A549 (cell line): ENCODE measurements at regions of chr17 and their contacts with region 1.

Region 1: GRCh38 chr17:34171245-34171818 is 83.8 kb upstream of the CCL2 start:
- DNase-seq: peak; percentile 60 to 68
- ATAC-seq: peak; percentile 68 to 97; a peak in 4 of 6 replicates
- H3K4me3 ChIP-seq: no peak overlapping the region
- H3K27ac ChIP-seq: no peak overlapping the region
- H3K4me1 ChIP-seq: no peaks in the 10 kb centered on the region
- CTCF ChIP-seq: peak; percentile 63
- EP300 ChIP-seq: no peak
- POLR2A ChIP-seq: no peak
- RAD21 ChIP-seq: peak; percentile 32 to 60; a peak in 4 of 5 replicates

Region 2: DNA sequence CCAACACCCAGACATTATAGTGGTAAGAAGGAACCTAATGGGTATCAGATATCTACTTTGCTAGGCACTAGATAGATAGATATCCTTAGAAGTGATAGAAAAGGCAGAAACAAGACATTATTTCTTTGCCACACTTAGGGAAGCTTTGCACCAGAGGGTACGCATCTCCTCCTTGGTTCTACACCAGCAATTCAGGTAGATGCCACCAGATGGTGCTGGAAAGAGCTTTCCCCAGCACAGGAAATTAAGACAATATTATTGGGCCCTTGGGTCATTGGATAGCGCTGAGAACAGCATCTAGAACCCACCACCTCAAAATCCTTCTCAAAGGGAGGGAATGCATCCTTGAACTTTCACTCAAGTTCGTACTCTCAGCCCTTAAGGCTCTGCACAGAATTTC is 90.1 kb before region 1 on chr17:
- CTCF ChIA-PET with region 1: no interaction called
- POLR2A ChIA-PET with region 1: no interaction called
- DNase-seq: peak; percentile 20 to 27
- ATAC-seq: peak; percentile 70 to 80; a peak in 5 of 6 replicates
- H3K4me3 ChIP-seq: no peak overlapping the region
- H3K27ac ChIP-seq: no peak overlapping the region
- H3K4me1 ChIP-seq: no peaks in the 10 kb centered on the region
- CTCF ChIP-seq: peak; percentile 36; the same call in 2 of the 3 replicates
- EP300 ChIP-seq: no peak
- POLR2A ChIP-seq: no peak
- RAD21 ChIP-seq: peak in 1 of 2 experiments; percentile 12; a peak in 1 of 5 replicates

Region 3: GRCh38 chr17:34098699-34099098 is 72.6 kb before region 1 on chr17:
- CTCF ChIA-PET with region 1: no interaction called
- POLR2A ChIA-PET with region 1: no interaction called
- DNase-seq: peak in 1 of 2 experiments; percentile 14
- ATAC-seq: peak in 1 of 2 experiments; percentile 72; a peak in 2 of 6 replicates
- H3K4me3 ChIP-seq: no peak overlapping the region
- H3K27ac ChIP-seq: no peak overlapping the region
- H3K4me1 ChIP-seq: no peaks in the 10 kb centered on the region
- CTCF ChIP-seq: no peak
- EP300 ChIP-seq: no peak
- POLR2A ChIP-seq: no peak
- RAD21 ChIP-seq: no peak

Region 4: GRCh38 chr17:34110315-34110714 is 61.0 kb before region 1 on chr17:
- CTCF ChIA-PET with region 1: no interaction called
- POLR2A ChIA-PET with region 1: no interaction called
- DNase-seq: no peak
- ATAC-seq: no peak
- H3K4me3 ChIP-seq: no peak overlapping the region
- H3K27ac ChIP-seq: no peak overlapping the region
- H3K4me1 ChIP-seq: no peaks in the 10 kb centered on the region
- CTCF ChIP-seq: no peak
- EP300 ChIP-seq: no peak
- POLR2A ChIP-seq: no peak
- RAD21 ChIP-seq: no peak

Region 5: GRCh38 chr17:34126965-34127364 is 44.4 kb before region 1 on chr17:
- CTCF ChIA-PET with region 1: no interaction called
- POLR2A ChIA-PET with region 1: no interaction called
- DNase-seq: no peak
- ATAC-seq: no peak
- H3K4me3 ChIP-seq: no peak overlapping the region
- H3K27ac ChIP-seq: no peak overlapping the region
- H3K4me1 ChIP-seq: no peaks in the 10 kb centered on the region
- CTCF ChIP-seq: no peak
- EP300 ChIP-seq: no peak
- POLR2A ChIP-seq: no peak
- RAD21 ChIP-seq: no peak

Region 6: DNA sequence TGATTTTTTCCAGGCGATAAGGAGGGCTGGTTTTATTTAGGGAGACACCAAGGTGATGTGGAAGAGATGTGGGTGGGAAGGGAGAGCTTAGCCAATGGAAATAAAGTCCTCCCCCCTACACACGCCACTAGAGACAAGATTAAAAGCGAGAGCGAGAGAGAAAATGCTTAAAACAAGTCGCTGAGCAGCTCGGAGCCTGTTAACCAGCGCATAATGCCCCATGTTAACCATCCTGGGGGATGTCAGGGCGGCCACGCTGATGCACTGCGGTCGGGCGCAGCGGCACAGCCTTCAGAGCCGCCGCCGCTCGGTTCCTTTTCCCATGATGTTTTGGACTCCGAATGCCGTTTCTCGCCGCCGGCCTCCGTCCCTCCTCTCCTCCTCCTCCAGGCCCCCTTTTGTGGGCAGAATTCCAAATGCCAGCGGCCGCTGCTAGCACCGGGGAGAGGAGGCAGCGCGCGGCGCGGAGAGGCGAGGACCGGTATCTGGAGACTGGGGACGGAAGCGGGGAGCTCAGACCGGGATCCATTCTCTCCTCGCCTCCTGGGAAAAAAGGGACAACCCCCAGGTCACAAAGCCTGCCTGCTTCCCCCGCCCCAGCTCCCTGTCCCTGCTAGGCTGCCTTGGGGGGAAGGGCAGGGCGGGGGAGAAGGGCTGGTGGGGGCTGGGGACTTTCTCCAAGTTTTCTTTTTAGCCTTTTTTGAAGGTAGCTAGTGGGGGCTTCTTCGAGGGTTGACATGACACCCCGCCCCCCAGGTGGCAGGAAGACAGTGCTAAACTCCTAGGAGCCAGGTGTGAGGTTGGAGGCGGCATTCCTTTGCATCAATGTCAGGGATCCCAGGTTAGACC is 14.4 kb before region 1 on chr17:
- CTCF ChIA-PET with region 1: interaction called, 18 read pairs
- POLR2A ChIA-PET with region 1: no interaction called
- DNase-seq: no peak
- ATAC-seq: no peak
- H3K4me3 ChIP-seq: no peak overlapping the region
- H3K27ac ChIP-seq: no peak overlapping the region
- H3K4me1 ChIP-seq: no peaks in the 10 kb centered on the region
- CTCF ChIP-seq: no peak
- EP300 ChIP-seq: no peak
- POLR2A ChIP-seq: no peak
- RAD21 ChIP-seq: no peak

Region 7: DNA sequence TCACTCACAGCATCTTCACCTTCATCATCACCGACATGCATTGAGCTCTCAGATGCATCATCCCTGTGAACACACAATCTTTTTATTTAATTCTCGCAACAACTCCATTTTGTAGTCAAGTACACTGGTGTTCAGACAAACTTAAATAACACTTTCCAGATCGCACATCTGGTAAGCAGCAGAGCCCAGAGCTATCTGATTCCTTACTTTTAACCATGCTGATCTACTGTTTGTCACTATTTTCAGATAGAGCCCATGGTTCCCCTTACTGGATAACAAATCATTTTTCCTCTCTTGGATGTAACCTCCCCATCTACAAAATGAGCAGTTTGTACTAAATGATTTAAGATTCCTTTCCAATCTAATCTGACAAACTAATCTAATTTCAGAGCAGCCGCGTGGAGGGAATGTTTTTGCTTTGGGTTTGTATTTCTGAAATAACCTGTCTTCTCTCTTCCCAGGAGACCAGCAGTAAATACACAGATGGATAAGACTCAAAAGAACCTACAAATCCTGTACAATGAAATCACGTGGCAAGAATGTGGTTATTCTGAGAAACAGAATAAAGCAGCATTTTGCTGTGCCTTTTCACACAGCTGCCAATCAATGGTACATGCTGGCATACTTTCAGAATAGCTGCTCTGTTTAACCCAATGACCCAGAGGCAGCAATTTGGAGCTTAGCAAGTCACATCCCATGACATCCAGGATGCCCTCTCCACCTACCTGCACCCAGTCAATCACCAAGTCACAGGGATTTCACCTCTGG is 10.9 kb after region 1 on chr17:
- CTCF ChIA-PET with region 1: interaction called, 12 read pairs
- POLR2A ChIA-PET with region 1: no interaction called
- DNase-seq: no peak
- ATAC-seq: no peak
- H3K4me3 ChIP-seq: no peak overlapping the region
- H3K27ac ChIP-seq: no peak overlapping the region
- H3K4me1 ChIP-seq: no peaks in the 10 kb centered on the region
- CTCF ChIP-seq: no peak
- EP300 ChIP-seq: no peak
- POLR2A ChIP-seq: no peak
- RAD21 ChIP-seq: no peak